A673 (cell line): ENCODE measurements at regions of chr15 and their contacts with region 1.

Region 1: DNA sequence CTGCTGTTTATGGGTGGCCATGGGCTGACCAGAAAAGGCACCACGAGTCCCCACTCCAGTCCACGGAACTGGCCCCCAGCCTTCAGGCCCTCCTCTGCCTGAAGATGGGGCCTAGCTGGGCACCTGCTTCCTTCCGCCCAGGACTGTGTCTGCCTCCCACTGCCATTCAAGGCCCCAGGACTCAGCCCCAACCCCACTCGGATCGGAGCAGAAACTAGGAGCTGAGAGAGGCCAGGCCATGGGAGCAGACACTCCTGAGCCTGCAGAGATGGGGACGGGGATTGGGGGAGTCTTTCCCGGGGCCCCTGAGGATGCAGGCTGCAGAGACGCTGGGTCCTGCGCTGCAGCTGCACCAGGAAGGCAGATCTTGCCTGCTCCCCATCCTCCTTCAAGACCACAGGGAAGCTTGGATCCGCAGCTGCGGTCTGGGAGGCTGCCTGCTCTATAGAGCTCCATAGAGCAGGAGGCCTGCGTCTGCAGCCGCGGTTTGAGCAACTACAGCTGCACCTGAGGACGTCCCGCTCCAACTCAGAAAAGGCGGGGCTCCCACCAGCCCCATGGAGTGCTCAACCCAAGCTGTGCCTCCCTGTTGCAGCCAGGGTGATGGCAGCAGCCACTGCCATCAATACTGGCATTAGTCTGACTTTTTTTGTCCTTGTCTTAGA is 383.9 kb upstream of the TMCO5A start:
- DNase-seq: no peak
- H3K4me3 ChIP-seq: no peak overlapping the region
- H3K27ac ChIP-seq: no peak overlapping the region
- H3K4me1 ChIP-seq: no peaks in the 10 kb centered on the region
- H3K27me3 ChIP-seq: no peaks in the 10 kb centered on the region
- CTCF ChIP-seq: no peak

Region 2: DNA sequence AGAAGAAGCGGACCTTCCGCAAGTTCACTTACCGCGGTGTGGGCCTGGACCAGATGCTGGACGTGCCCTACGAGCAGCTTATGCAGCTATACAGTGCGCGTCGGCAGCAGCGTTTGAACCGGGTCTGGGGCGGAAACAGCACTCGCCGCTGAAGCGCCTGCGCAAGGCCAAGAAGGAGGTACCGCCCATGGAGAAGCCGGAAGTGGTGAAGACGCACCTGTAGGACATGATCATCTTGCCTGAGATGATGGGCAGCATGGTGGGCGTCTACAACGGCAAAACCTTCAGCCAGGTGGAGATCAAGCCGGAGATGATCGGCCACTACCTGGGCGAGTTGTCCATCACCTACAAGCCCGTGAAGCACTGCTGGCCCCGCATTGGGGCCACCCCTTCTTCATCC is 59.8 kb before region 1 on chr15:
- CTCF ChIA-PET with region 1: no interaction called
- POLR2A ChIA-PET with region 1: no interaction called
- intact Hi-C with region 1: loop called (anchors 10 kb)
- DNase-seq: no peak
- H3K4me3 ChIP-seq: no peak overlapping the region
- H3K27ac ChIP-seq: no peak overlapping the region
- H3K4me1 ChIP-seq: no peaks in the 10 kb centered on the region
- H3K27me3 ChIP-seq: no peaks in the 10 kb centered on the region
- CTCF ChIP-seq: no peak